ACHN (cell line): ENCODE measurements at regions of chr2 and their contacts with region 1.

Region 1: GRCh38 chr2:24984912-24985311 is 13.2 kb upstream of the DNAJC27 start:
- DNase-seq: no peak

Region 2: DNA sequence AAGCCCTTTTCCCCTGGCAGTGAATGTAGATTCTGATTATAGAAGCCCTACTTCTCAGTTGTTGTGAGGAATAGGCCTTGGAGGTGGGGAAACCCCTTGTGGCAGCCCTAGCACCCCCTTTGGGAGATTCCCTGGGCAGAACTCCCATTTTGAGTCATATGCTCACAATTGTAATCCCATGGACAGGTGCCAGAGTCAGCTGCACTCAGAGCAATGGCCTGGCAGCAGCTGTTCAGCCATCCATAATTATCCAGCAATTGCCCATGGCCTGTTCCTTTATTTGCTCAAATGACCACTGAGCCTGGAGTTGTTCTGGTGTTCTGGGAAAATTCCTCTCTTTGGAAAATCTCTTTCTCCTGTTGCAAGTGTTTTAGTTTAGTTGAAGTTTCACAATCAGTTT is 263.4 kb before region 1 on chr2:
- in situ Hi-C with region 1: no loop called
- DNase-seq: peak; percentile 73

Region 3: DNA sequence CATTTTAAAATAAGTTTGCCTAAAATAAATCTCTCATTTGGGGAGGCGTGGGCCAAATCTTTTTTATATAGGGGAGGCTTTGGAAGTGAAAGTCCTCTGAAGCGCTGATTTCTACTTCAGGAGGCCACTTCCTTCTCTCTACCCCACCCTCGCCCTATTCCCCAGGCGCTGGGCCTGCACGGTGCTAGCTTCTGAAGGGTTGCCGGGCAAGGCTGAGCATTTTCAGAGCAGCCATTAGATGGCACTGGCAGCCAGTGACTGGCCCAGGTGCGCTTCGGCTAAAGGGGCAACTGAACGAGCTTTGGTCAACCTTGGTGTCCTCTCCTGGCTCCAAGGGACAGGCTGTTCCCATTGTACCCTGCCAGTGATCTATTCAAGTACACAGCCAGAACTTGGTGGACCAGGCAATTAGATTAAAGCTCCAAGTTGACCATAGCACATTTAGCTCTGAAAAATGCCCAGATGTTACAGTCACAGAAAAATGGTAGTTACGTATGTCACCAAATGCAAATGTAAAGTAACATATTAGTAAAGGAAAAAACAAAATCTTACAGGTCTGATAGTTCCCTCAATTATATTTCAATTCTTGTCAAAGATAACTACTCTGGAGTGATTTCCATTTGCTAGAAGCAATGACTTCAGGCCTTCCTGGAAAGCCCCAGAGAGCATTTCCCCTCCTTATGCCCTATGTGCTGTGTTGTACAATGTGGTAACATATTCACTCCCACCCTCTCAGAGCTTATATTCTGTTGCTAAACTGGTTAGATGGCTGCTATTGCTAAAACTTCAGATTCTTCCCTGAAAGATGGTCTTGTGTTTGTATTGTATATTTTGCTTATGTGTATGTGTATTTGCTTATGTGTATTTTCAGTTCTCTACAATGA is 181.3 kb after region 1 on chr2:
- in situ Hi-C with region 1: loop called (anchors 25 kb)
- DNase-seq: peak; percentile 44